ENCODE measurements at regions of chr14 and their contacts with region 1.

Region 1: GRCh38 chr14:62468946-62469345 is 576.3 kb downstream of the KCNH5 start:
- DNase-seq: no peak
- H3K4me3 ChIP-seq: no peak overlapping the region
- CTCF ChIP-seq: no peak

Region 2: GRCh38 chr14:62381311-62382070 is 87.5 kb before region 1 on chr14:
- in situ Hi-C with region 1: loop called (anchors 5 kb)
- DNase-seq: no peak
- H3K4me3 ChIP-seq: no peak overlapping the region
- CTCF ChIP-seq: no peak